ENCODE measurements at regions of chr3 and their contacts with region 1.

Region 1: DNA sequence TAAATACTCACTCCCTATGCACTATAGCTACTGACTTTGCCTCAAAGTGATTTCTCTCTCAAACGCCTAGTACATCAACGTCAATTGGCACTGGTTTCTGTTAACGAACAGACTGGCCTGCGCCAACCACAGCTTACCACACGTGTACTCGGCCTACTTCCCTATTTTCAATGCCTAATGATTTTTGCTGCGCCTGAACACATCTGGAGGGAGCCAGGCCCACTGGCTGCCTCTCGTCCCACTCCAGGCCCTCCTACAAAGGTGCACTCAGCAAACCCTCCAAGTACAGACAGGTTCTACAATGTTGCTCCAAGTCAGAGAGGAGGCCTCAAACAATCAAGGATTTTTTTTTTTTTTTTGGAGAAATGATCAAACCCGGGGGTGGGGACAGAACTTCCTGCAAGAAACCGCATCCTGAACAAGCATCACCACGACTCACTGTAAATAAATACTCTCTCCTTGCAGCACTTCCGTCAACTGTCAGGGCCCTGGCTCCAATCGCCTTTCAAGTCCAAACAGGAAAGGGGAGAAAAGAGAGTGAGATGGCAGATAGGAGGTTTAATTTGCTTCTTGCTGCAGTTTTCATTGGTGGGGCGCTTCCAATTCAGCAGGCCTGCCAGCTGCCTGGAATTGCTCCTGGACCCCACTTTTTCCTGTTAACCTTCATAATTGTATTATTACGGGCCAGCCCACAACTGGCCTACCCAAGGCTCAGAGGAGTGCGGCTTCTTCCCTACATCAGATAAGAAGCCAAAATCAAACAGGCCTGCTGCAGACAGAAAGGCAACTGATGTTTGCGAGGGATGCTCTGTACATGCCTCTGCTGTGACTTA is 139.3 kb downstream of the FOXP1 start:
- DNase-seq: peak; percentile 80
- H3K4me3 Mint-ChIP-seq: peak overlapping the region; percentile 71
- H3K27ac Mint-ChIP-seq: peak overlapping the region; percentile 98
- H3K4me1 Mint-ChIP-seq: peaks cover 93% of the 10 kb centered on the region
- H3K27me3 Mint-ChIP-seq: no peaks in the 10 kb centered on the region

Region 2: DNA sequence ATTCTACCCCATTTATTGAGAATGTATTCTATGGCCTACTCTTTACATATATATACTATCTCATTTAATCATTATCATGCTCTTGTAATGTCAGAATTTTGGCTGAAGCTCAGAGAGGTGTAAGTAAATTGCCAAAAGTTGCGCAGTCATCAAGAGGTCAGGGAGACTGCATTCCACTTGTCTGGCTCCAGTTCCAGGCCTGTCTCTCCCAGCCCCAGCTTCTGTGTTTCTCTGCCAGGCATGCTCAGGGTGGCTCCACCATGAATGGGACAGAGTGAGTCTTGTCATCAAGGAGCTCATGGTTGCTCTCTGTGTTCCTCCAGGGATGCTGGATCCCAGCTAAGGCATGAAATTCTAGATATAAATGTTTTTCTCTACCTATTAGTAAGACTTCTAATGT is 496.7 kb before region 1 on chr3:
- CTCF ChIA-PET with region 1: no interaction called
- intact Hi-C with region 1: no loop called
- DNase-seq: no peak
- H3K4me3 Mint-ChIP-seq: no peak overlapping the region
- H3K27ac Mint-ChIP-seq: no peak overlapping the region
- H3K4me1 Mint-ChIP-seq: no peaks in the 10 kb centered on the region
- H3K27me3 Mint-ChIP-seq: peaks cover 4% of the 10 kb centered on the region

Region 3: DNA sequence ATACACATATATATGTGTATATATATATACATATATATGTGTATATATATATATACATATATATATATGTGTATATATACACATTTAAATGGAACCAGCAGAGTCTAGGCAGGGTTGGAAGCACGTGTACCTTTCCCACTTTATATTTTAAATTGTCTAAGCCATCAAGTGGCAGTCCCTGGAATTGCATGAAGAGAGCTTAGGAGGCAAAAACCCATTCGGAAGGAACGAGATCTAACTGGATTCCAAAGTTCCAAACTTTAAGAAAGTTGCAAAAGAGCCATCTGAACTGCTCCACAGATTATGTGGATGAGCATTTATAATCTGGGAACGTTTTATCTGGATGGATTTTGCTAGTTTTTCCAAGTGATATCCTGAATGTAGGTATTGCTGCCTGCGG is 47.2 kb before region 1 on chr3:
- CTCF ChIA-PET with region 1: interaction called, 11 read pairs
- intact Hi-C with region 1: loop called (anchors 1 kb)
- DNase-seq: peak; percentile 35
- H3K4me3 Mint-ChIP-seq: peak overlapping the region; percentile 5
- H3K27ac Mint-ChIP-seq: no peak overlapping the region
- H3K4me1 Mint-ChIP-seq: peaks cover 81% of the 10 kb centered on the region
- H3K27me3 Mint-ChIP-seq: no peaks in the 10 kb centered on the region

Region 4: GRCh38 chr3:71423151-71423906 is 20.9 kb before region 1 on chr3:
- CTCF ChIA-PET with region 1: interaction called, 3 read pairs
- intact Hi-C with region 1: loop called (anchors 1 kb)
- DNase-seq: no peak
- H3K4me3 Mint-ChIP-seq: no peak overlapping the region
- H3K27ac Mint-ChIP-seq: peak overlapping the region; percentile 30
- H3K4me1 Mint-ChIP-seq: peaks cover 84% of the 10 kb centered on the region
- H3K27me3 Mint-ChIP-seq: no peaks in the 10 kb centered on the region

Region 5: GRCh38 chr3:71456156-71456555 is 11.9 kb after region 1 on chr3:
- CTCF ChIA-PET with region 1: interaction called, 11 read pairs
- intact Hi-C with region 1: loop called (anchors 1 kb)
- DNase-seq: no peak
- H3K4me3 Mint-ChIP-seq: peak overlapping the region; percentile 77
- H3K27ac Mint-ChIP-seq: peak overlapping the region; percentile 93
- H3K4me1 Mint-ChIP-seq: peaks cover 88% of the 10 kb centered on the region
- H3K27me3 Mint-ChIP-seq: no peaks in the 10 kb centered on the region

Region 6: DNA sequence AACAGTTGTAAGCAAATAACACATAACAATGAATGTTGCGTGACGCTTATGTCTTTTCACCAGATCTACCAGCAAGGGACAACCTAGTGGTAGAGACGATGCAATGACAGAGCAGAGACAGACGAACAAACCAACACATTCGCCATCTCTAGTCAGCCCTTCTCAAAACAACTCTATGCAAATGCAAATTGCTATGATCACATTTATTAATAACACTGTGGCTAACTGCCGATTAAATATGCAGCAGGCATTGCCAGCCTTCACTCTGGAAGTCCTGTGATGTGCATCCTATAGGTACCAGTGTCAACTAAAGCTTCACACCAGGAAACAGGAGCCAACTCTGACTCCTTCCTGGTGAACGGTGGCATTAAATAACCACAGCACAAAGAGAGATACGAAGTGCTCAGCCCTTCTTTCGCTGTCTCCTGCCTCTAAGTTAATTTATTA is 45.1 kb after region 1 on chr3:
- CTCF ChIA-PET with region 1: interaction called, 5 read pairs
- intact Hi-C with region 1: loop called (anchors 1 kb)
- DNase-seq: peak; percentile 35
- H3K4me3 Mint-ChIP-seq: peak overlapping the region; percentile 67
- H3K27ac Mint-ChIP-seq: peak overlapping the region; percentile 88
- H3K4me1 Mint-ChIP-seq: peaks cover 88% of the 10 kb centered on the region
- H3K27me3 Mint-ChIP-seq: no peaks in the 10 kb centered on the region

Region 7: GRCh38 chr3:71536376-71536965 is 92.2 kb after region 1 on chr3:
- CTCF ChIA-PET with region 1: no interaction called
- intact Hi-C with region 1: no loop called
- DNase-seq: no peak
- H3K4me3 Mint-ChIP-seq: no peak overlapping the region
- H3K27ac Mint-ChIP-seq: no peak overlapping the region
- H3K4me1 Mint-ChIP-seq: peaks cover 11% of the 10 kb centered on the region
- H3K27me3 Mint-ChIP-seq: peaks cover 3% of the 10 kb centered on the region

Measured in activated naive CD4-positive, alpha-beta T cell treated with anti-CD3 and anti-CD28 coated beads for 36 hours (primary cell).